ENCODE measurements at regions of chr19 and their contacts with region 1.

Region 1: GRCh38 chr19:43519436-43520088 is 7.4 kb downstream of the ETHE1 start:
- DNase-seq: peak; percentile 83
- ATAC-seq: peak; percentile 68
- H3K4me3 ChIP-seq: no peak overlapping the region
- H3K27ac ChIP-seq: no peak overlapping the region
- H3K4me1 ChIP-seq: peaks cover 4% of the 10 kb centered on the region; the same call in 1 of the 2 replicates
- H3K27me3 ChIP-seq: no peaks in the 10 kb centered on the region
- CTCF ChIP-seq: peak; percentile 84

Region 2: GRCh38 chr19:43433358-43433673 is 86.2 kb before region 1 on chr19:
- CTCF ChIA-PET with region 1: interaction called, 9 read pairs
- POLR2A ChIA-PET with region 1: no interaction called
- intact Hi-C with region 1: loop called (anchors 1 kb)
- DNase-seq: no peak
- ATAC-seq: no peak
- H3K4me3 ChIP-seq: no peak overlapping the region
- H3K27ac ChIP-seq: no peak overlapping the region
- H3K4me1 ChIP-seq: peaks cover 8% of the 10 kb centered on the region
- H3K27me3 ChIP-seq: no peaks in the 10 kb centered on the region
- CTCF ChIP-seq: no peak

Region 3: GRCh38 chr19:43438291-43439096 is 81.1 kb before region 1 on chr19:
- CTCF ChIA-PET with region 1: interaction called, 11 read pairs
- POLR2A ChIA-PET with region 1: no interaction called
- intact Hi-C with region 1: loop called (anchors 1 kb)
- DNase-seq: peak; percentile 67
- ATAC-seq: peak; percentile 61
- H3K4me3 ChIP-seq: peak overlapping the region; percentile 49
- H3K27ac ChIP-seq: peak overlapping the region; percentile 97
- H3K4me1 ChIP-seq: peaks cover 20% of the 10 kb centered on the region
- H3K27me3 ChIP-seq: no peaks in the 10 kb centered on the region
- CTCF ChIP-seq: no peak

Region 4: DNA sequence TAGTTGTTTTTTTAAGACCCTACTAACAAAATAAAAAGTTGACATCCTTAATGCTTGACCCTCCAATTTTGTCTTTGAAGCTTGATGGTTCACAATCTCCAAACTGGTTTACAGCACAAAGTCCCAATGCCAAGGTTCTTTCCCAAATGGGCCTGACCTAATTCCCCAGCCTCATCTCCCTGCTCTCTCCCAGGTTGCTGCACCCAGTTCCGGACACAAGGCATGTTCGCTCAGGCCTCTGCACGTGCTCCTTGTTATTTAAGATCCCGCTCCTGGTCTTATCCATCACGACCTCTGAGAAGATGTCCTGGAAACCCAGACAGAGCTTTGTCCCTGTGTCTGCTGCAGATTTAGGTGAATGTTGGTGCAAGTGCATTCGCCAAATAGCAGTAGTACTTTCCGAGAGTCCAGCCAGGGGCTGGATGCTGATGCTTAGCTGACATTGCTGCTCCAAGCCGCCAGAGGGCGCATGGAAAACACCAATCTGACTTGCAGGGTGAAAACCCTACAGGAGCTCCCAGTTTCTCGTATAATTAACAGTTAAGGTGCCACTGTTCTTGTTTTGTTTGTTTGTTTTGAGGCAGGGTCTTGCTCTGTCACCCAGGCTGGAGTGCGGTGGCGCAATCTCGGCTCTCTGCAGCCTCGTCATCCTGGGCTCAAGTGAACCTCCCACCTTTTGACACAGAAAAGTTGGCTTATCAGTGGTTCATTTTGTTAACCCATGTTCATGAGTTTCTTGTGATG is 72.6 kb before region 1 on chr19:
- CTCF ChIA-PET with region 1: interaction called, 39 read pairs
- POLR2A ChIA-PET with region 1: no interaction called
- intact Hi-C with region 1: loop called (anchors 1 kb)
- DNase-seq: peak; percentile 75
- ATAC-seq: peak; percentile 81
- H3K4me3 ChIP-seq: no peak overlapping the region
- H3K27ac ChIP-seq: no peak overlapping the region
- H3K4me1 ChIP-seq: no peaks in the 10 kb centered on the region; the same call in 1 of the 2 replicates
- H3K27me3 ChIP-seq: no peaks in the 10 kb centered on the region
- CTCF ChIP-seq: peak; percentile 88